Posterior vena cava (tissue), 2 donors: ENCODE measurements at regions of chr11 and their contacts with region 1.

Region 1: DNA sequence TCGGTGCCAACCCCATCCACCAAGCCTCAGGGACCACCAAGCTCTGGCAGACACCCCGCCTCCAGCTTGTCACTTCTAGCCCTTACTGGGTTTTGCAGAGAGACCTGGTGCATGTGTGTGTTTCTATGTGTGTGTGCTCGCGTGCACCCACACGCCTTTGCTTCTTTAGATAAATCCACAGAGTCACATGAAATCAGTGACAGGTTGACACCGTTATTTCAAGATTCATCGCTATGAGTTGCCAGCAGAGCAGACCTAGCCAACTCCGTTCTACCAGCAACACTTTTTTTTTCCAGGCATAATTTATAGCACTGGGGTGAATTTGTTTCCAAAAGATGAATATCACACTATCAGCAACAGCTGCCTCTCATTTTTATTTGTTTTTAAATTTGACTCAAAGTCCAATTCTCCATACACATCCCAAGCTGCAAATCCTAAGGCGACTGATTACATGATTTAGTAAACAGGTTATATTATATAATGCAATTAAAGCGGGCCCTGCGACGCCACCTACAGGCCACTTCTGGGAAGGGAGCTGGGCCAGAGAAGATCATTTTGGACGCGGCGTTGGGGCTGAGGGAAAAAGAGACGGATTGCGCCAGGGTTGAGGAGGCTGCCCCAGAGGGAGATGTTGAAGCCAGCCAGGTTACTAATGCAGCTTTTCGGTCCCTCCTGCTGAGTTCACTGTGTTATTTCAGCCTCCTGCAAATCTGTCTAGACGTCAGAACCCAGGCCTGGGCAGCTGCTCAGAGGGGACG is 150.5 kb downstream of the FEZ1 start:
- DNase-seq: peak; percentile 96

Region 2: DNA sequence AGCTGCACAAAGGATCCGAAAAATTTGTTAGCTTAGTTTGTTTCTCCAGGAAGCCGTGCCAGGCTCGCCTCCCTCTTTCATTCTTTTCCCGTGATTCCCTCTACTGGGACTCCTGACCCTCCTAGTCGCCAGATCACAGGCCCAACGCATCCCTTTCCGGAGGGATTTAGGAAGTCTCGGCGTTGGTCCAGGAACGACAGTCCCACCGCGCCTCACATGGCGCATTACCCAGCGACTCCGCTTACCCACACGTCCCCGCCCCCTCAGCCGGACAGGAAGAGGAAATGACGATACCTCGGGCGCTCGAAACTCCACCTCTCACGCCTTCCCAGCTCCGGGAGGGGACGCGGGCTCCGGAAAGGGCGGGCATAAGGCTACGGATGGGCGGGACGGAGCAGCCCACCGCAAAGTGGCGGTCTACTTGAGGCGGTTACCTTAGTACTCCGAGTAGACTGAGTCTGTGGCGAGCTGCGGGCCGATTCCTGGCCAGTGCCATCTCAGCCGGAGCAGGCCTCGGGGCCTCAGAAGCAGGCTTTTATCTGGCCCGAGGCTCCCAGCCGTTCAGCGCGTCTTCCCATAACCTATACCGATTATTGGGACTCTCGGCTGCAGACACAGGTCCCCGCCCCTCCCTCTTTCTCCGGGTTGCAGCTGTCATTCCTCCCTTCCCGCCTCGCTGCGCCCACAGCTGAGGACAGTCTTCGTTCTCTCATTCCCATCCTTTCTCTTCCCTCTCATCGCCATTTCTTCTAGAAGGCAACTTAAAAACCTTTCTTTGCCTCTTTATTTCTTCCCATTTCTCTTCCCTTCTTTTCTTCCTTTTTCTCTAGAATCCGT is 391.6 kb before region 1 on chr11 and contains the start of gene CCDC15:
- intact Hi-C with region 1: loop called in 1 of 2 experiments (anchors 5 kb)
- DNase-seq: peak; percentile 99
- total RNA-seq, gene CCDC15: 1.1 to 1.6 TPM

Region 3: DNA sequence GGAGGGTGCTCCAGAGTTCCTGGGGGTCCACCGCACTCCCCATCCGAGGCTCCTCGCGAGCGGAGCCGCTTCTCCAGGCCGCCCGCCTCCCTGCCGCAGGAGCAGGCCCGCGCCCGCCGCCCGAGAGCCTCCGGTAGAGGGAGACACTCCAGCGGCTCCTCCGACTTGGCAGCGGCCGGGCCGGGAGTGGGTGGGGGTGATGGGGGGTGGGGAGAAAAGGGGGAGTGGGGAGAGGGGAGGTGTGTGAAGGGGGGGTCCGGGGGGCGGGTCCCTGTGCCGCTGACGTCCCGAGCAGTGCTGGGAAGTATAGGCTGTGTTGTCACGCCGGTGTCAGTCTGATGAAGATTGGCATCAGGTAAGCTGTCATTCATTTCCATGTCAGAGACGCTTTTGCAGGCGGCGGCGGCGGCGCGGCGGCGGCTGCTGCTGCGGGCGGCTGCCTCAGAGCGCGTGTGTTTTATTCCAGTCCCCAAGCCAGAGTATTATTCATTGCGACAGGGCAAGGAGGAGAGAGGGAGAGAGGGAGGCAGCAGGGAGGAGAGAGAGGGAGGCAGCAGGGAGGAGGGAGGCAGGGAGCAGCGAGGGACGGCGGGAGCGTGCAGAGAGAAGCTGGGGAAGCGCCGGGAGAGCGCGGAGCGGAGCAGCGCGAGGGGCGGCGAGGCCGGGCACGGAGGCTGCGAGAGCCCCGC is 181.0 kb before region 1 on chr11 and contains the start of gene PKNOX2:
- intact Hi-C with region 1: loop called in 1 of 2 experiments (anchors 2 kb)
- DNase-seq: peak; percentile 92
- total RNA-seq, gene PKNOX2: 8.2 to 8.3 TPM

Region 4: GRCh38 chr11:125389339-125390166 is 44.0 kb after region 1 on chr11:
- intact Hi-C with region 1: loop called in 1 of 2 experiments (anchors 5 kb)
- DNase-seq: peak; percentile 57

Region 5: GRCh38 chr11:125404776-125405435 is 59.3 kb after region 1 on chr11:
- intact Hi-C with region 1: loop called in 1 of 2 experiments (anchors 5 kb)
- DNase-seq: peak; percentile 90